ENCODE measurements at regions of chr1 and their contacts with region 1.

Region 1: DNA sequence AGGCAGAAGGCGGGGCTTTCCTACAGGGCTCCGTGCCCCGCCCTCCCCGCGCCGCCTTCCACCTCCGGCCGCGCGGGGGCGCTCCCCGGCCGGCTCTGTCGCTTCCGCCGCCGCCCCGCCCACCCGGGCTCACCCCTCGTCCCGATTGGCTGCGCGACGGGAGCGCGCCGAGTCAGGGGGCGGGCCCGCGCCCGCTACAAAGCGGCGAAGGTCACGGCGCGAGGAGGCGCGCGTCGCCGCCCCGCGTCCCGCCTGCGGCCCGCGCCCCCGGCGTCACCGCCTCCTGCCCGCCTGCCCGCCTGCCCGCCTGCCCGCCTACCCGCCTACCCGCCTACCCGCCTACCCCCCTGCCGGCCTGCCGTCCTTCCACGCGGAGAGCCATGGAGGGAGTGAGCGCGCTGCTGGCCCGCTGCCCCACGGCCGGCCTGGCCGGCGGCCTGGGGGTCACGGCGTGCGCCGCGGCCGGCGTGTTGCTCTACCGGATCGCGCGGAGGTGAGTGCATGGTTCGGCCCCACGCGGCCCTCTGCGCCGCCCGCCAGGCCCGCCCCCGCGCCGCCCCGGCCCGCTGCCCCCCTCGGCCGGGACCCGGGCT is at the start of gene TMEM201:
- DNase-seq: peak; percentile 91 to 97 (median 94)
- H3K4me3 ChIP-seq: peak within 1 kb of the TSS in 2 of 4 donors; percentile 73 to 82
- H3K27ac ChIP-seq: peak within 1 kb of the TSS in 3 of 5 donors; percentile 60 to 88 (median 64)
- H3K4me1 ChIP-seq: peaks cover 15 to 24% of the 10 kb centered on the region in 2 donors
- H3K27me3 ChIP-seq: no peaks in the 10 kb centered on the region
- CTCF ChIP-seq: peak in 3 of 6 experiments; percentile 73 to 88 (median 84)
- POLR2A ChIP-seq: peak in 1 of 2 donors; percentile 51
- total RNA-seq, gene TMEM201: 3.1 to 12.6 (median 10.1) TPM

Region 2: DNA sequence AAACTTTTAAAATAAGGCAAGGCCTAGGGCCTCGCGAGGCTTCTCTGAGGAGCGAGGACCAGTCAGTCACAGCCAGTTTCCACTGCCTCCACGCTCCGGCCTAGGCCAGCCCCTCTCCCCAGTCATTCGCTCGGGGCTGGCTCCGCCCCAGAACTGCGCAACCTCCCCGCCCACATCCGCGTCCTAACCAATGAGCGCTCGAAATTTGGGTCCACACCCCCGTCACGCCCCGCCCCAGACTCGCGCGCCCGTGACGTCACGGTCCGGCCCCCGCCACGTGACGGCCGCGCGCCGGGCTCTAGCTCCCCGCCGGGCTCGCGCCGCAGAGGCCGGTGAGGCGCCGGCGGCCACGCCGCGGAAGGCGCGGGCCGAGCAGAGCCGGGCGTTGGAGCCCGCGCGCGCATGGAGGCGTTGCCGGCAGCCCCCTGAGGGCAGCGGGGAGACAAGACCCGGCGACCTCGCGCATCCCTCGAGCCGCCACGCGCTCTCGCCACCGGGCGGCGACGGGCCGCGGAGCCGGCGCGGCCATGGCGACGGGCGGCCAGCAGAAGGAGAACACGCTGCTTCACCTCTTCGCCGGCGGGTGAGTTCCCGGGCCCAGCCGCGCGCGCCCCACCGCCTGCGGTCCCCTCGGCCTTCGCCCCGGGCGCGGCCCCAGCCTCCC is 49.4 kb before region 1 on chr1 and contains the start of gene SLC25A33:
- intact Hi-C with region 1: loop called in 1 of 2 experiments (anchors 10 kb)
- DNase-seq: peak; percentile 96 to 99 (median 98)
- H3K4me3 ChIP-seq: peak within 1 kb of the TSS in 3 of 4 donors; percentile 11 to 90 (median 52)
- H3K27ac ChIP-seq: peak within 1 kb of the TSS in 4 of 5 donors; percentile 53 to 92 (median 84)
- H3K4me1 ChIP-seq: peaks cover 0 to 11% of the 10 kb centered on the region in 2 donors
- H3K27me3 ChIP-seq: no peaks in the 10 kb centered on the region
- CTCF ChIP-seq: peak in 2 of 6 experiments; percentile 9 to 16
- POLR2A ChIP-seq: peak; percentile 94
- total RNA-seq, gene SLC25A33: 2.1 to 10.3 (median 3.6) TPM

Region 3: DNA sequence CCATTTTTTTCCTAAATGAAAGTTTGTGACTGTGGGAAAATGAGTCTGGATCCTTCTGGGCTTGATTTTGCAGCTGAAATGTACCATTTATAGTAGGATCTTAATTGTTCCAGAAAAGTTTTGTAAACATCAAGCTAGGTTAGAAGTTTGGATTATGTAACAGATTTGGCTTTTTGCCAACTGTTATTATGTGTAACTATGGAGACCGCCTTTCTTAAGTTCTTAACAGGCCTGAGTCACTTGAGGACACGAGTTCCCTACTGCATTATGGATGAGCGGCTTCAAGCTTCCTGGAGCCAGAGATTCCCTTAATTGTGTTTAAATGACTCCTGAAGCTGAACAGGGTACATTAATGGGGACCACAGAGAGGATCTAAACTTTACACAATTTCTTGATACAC is 27.2 kb before region 1 on chr1:
- intact Hi-C with region 1: no loop called
- DNase-seq: peak in 6 of 7 donors; percentile 44 to 81 (median 64)
- H3K4me3 ChIP-seq: no peak overlapping the region
- H3K27ac ChIP-seq: peak overlapping the region in 3 of 5 donors; percentile 29 to 53 (median 53)
- H3K4me1 ChIP-seq: peaks cover 0 to 14% of the 10 kb centered on the region in 2 donors
- H3K27me3 ChIP-seq: no peaks in the 10 kb centered on the region
- CTCF ChIP-seq: no peak
- POLR2A ChIP-seq: no peak

Region 4: DNA sequence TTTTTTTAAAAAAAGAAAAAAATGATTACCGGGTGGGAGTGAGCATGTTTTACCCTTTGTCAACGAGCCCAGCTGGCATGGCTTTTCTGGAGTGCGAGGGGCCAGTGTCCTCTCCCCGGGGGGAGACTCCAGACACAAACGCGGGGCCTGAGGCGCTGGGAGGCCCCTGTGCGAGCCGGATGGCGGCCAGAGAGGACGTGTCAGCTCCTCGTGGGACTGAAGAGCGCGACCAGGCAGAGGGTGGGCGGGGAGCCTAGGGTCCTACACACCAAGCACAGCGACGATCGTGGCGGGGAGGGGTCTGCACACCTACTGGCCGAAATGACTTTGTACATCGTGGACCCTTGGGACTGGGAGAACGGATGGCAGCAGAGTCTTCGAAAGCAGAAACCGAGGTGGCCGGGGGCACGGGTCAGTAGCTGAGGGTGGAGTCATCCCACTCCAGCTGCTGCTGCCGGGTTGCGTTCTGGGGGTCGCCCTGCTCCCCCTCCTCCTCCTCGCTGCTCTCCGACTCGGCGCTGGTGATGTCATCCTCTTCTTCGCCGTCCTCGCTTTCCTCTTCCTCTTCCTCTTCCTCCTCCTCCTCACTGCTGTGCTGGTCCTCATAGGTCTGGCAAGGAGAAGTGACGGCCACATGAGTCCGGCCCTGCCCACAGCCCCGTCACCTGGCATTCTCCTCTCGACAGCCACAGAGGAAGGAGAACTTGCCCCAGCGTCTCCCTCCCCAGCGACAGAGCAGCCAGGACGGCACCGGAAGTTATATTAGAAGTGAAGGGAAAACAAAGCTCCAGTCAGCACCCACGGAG is 141.7 kb after region 1 on chr1:
- intact Hi-C with region 1: no loop called
- DNase-seq: peak in 6 of 7 donors; percentile 33 to 71 (median 53)
- H3K4me3 ChIP-seq: no peak overlapping the region
- H3K27ac ChIP-seq: no peak overlapping the region
- H3K4me1 ChIP-seq: no peaks in the 10 kb centered on the region
- H3K27me3 ChIP-seq: no peaks in the 10 kb centered on the region
- CTCF ChIP-seq: no peak
- POLR2A ChIP-seq: no peak

Measured in adrenal gland (tissue), 19 donors.